Activated B cell treated with CpG ODN at 0.5 μM for 24 hours (primary cell): ENCODE measurements at regions of chr10 and their contacts with region 1.

Region 1: DNA sequence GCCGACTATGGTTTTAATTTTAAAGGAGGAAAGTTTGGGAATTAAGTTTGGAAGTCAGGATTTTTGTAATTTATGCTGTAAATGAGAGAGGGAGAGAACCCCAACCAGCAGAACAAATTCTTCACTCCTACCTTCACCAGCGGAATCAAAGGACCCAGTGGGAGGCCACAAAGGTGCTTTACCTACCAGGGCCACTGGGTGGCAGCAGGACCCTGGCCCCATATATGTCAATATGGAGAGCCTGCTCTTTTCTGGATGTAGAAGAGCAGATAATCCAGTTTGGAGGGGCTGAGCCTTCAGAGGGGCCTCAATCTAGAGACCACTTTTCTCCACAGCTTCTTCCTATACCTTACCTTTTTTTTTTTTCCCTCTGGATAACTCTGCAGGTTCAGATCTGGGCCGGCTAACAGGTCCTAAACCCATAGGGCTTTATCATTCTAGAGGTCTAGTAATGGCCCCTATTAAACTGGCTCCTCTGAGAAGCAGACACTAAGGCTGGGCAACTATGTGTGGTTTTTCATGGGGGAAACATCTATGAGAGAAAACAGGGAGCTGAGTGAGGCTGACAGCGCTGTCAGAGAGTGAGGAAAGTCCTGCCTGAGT is 8.5 kb upstream of the SCD start:
- DNase-seq: peak; percentile 64
- ATAC-seq: peak; percentile 87
- H3K4me3 Mint-ChIP-seq: peak overlapping the region; percentile 24
- H3K27ac Mint-ChIP-seq: peak overlapping the region; percentile 19
- H3K4me1 Mint-ChIP-seq: peaks cover 25% of the 10 kb centered on the region
- H3K27me3 Mint-ChIP-seq: peaks cover 3% of the 10 kb centered on the region
- CTCF ChIP-seq: no peak

Region 2: GRCh38 chr10:100267237-100268104 is 71.1 kb before region 1 on chr10 and contains the start of gene CWF19L1:
- CTCF ChIA-PET with region 1: no interaction called
- POLR2A ChIA-PET with region 1: no interaction called
- intact Hi-C with region 1: no loop called
- DNase-seq: peak; percentile 62
- ATAC-seq: peak; percentile 80
- H3K4me3 Mint-ChIP-seq: peak within 1 kb of the TSS; percentile 99
- H3K27ac Mint-ChIP-seq: peak within 1 kb of the TSS; percentile 97
- H3K4me1 Mint-ChIP-seq: peaks cover 33% of the 10 kb centered on the region
- H3K27me3 Mint-ChIP-seq: no peaks in the 10 kb centered on the region
- CTCF ChIP-seq: no peak
- total RNA-seq, gene CWF19L1: 41.8 and 53.3 TPM in 2 replicates

Region 3: GRCh38 chr10:100303724-100304319 is 34.7 kb before region 1 on chr10:
- CTCF ChIA-PET with region 1: interaction called, 4 read pairs
- POLR2A ChIA-PET with region 1: no interaction called
- intact Hi-C with region 1: loop called (anchors 1 kb)
- DNase-seq: no peak
- ATAC-seq: no peak
- H3K4me3 Mint-ChIP-seq: no peak overlapping the region
- H3K27ac Mint-ChIP-seq: no peak overlapping the region
- H3K4me1 Mint-ChIP-seq: no peaks in the 10 kb centered on the region
- H3K27me3 Mint-ChIP-seq: peaks cover 35% of the 10 kb centered on the region
- CTCF ChIP-seq: peak; percentile 36

Region 4: DNA sequence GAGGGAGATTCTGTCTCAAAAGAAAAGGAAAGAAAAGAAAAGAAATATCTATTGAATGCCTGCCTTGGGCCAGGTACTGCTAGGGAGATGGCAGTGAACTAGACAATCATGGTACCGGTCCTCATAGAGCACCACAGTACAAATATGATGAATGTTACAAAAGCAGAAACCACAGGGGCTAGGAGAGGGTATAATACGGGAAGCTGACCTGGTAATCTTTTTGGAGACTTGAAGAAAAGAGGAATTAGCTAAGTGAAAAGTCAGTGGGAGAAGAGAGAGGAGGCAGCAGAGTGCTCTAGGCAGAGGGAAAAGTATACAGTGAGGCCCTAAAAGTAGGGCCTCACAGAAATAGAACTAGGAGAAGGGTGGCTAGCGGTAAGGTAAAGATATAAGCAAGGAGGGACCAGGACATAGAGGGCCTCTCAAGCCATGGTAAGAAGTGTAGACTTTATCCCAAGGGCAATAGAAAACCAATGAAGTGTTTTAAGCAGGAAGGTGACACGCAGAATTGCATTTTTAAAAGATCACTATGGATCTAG is 81.4 kb after region 1 on chr10:
- CTCF ChIA-PET with region 1: interaction called, 3 read pairs
- POLR2A ChIA-PET with region 1: interaction called, 13 read pairs
- intact Hi-C with region 1: no loop called
- DNase-seq: no peak
- ATAC-seq: no peak
- H3K4me3 Mint-ChIP-seq: no peak overlapping the region
- H3K27ac Mint-ChIP-seq: no peak overlapping the region
- H3K4me1 Mint-ChIP-seq: no peaks in the 10 kb centered on the region
- H3K27me3 Mint-ChIP-seq: peaks cover 29% of the 10 kb centered on the region
- CTCF ChIP-seq: no peak

Region 5: DNA sequence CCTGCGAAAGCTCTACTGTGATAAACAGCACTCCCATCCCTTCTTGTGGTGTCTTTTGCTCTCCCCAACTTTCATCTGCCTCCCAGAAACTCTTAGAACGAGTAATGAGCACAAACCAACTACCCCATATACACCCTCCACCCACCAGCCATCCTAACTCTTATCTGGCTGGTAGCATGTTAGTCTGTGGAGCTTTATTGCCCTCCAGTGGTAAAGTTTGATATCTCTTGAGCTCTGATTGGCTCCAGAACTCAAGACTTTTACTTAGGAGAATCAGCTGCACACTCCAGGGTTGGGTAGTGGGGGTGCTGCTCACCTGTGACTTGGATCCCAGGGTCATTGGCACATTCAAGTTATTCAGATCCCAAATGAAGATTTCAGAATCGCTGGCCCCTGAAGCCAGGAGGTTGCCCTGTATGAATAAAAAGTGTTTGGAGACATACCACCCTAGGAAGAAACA is 170.2 kb after region 1 on chr10:
- CTCF ChIA-PET with region 1: interaction called, 7 read pairs
- POLR2A ChIA-PET with region 1: no interaction called
- intact Hi-C with region 1: loop called (anchors 2 kb)
- DNase-seq: no peak
- ATAC-seq: peak; percentile 68
- H3K4me3 Mint-ChIP-seq: no peak overlapping the region
- H3K27ac Mint-ChIP-seq: no peak overlapping the region
- H3K4me1 Mint-ChIP-seq: no peaks in the 10 kb centered on the region
- H3K27me3 Mint-ChIP-seq: no peaks in the 10 kb centered on the region
- CTCF ChIP-seq: no peak